Mammary epithelial cell (primary cell): ENCODE measurements at regions of chr6 and their contacts with region 1.

Region 1: GRCh38 chr6:36368921-36369865 is 18.3 kb downstream of the ETV7 start:
- DNase-seq: peak; percentile 82
- H3K4me3 ChIP-seq: no peak overlapping the region
- H3K27ac ChIP-seq: no peak overlapping the region
- H3K4me1 ChIP-seq: peaks cover 14% of the 10 kb centered on the region
- H3K27me3 ChIP-seq: no peaks in the 10 kb centered on the region
- CTCF ChIP-seq: no peak

Region 2: DNA sequence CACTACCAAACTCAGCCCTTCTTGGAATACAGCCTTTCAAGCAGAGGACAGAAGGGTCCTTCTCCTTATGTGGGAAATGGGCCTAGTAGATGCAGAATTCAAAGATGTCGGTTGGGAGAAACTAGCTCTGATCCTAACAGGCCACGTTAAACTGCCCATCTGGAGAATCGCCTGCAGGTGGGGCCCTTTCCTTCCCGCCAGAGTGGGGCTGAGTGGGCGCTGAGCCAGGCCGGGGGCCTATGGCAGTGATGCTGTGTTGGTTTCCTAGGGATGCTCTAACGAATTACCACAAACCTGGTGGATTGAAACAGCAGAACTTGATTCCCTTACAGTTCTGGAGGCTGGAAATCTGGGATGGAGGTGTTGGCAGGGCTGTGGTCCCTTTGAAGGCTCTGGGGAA is 229.8 kb before region 1 on chr6:
- CTCF ChIA-PET with region 1: no interaction called
- dilution Hi-C with region 1: no loop called
- in situ Hi-C with region 1: no loop called
- intact Hi-C with region 1: no loop called
- DNase-seq: no peak
- H3K4me3 ChIP-seq: no peak overlapping the region
- H3K27ac ChIP-seq: no peak overlapping the region
- H3K4me1 ChIP-seq: no peaks in the 10 kb centered on the region
- H3K27me3 ChIP-seq: no peaks in the 10 kb centered on the region
- CTCF ChIP-seq: peak in 1 of 2 donors; percentile 10

Region 3: GRCh38 chr6:36333931-36334725 is 35.1 kb before region 1 on chr6:
- CTCF ChIA-PET with region 1: no interaction called
- dilution Hi-C with region 1: loop called (anchors 5 kb)
- in situ Hi-C with region 1: no loop called
- intact Hi-C with region 1: no loop called
- DNase-seq: no peak
- H3K4me3 ChIP-seq: no peak overlapping the region
- H3K27ac ChIP-seq: no peak overlapping the region
- H3K4me1 ChIP-seq: no peaks in the 10 kb centered on the region
- H3K27me3 ChIP-seq: peaks cover 6% of the 10 kb centered on the region
- CTCF ChIP-seq: no peak